Activated B cell treated with CpG ODN at 0.5 μM for 24 hours (primary cell): ENCODE measurements at regions of chr12 and their contacts with region 1.

Region 1: DNA sequence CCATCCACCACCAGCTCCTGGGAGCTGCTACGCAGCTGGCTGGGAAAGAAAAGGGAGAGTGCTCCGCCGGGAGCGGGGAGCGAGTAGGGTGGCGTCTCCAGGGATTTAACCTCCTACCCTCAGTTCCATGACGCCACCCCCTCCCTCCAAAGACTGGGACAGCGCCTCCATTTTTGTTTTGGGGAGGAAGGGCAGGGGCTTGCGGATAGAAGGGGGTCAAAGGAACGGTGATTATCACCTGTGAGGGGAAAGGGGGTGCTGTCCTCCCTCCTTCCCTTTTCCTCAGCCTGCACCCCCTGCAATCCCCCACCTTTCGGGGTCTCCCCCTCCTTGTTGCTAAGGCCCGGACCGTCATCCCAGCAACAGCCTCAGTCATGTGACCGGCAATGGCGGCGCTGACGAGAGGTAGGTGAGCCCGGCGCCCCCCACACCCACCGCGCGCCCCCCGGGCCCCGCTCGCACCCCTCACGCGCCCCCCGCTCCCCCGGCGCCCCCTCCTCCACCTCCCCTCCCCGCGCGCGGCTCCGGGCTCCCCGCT is at the start of gene DTX3:
- DNase-seq: no peak
- ATAC-seq: peak; percentile 61
- H3K4me3 Mint-ChIP-seq: peak within 1 kb of the TSS; percentile 79
- H3K27ac Mint-ChIP-seq: no peak within 1 kb of the TSS
- H3K4me1 Mint-ChIP-seq: peaks cover 16% of the 10 kb centered on the region
- H3K27me3 Mint-ChIP-seq: peaks cover 34% of the 10 kb centered on the region
- CTCF ChIP-seq: no peak
- total RNA-seq, gene DTX3: 3.7 and 3.9 TPM in 2 replicates

Region 2: GRCh38 chr12:57590536-57591479 is 13.7 kb before region 1 on chr12 and contains the start of gene PIP4K2C:
- CTCF ChIA-PET with region 1: no interaction called
- POLR2A ChIA-PET with region 1: interaction called, 10 read pairs
- intact Hi-C with region 1: loop called (anchors 1 kb)
- DNase-seq: peak; percentile 79
- ATAC-seq: peak; percentile 96
- H3K4me3 Mint-ChIP-seq: peak within 1 kb of the TSS; percentile 88
- H3K27ac Mint-ChIP-seq: peak within 1 kb of the TSS; percentile 68
- H3K4me1 Mint-ChIP-seq: peaks cover 19% of the 10 kb centered on the region
- H3K27me3 Mint-ChIP-seq: no peaks in the 10 kb centered on the region
- CTCF ChIP-seq: no peak
- total RNA-seq, gene PIP4K2C: 16.5 and 17.9 TPM in 2 replicates

Region 3: GRCh38 chr12:57771708-57772428 is 167.3 kb after region 1 on chr12 and contains the start of gene METTL1:
- CTCF ChIA-PET with region 1: no interaction called
- POLR2A ChIA-PET with region 1: no interaction called
- intact Hi-C with region 1: no loop called
- DNase-seq: peak; percentile 81
- ATAC-seq: peak; percentile 91
- H3K4me3 Mint-ChIP-seq: peak within 1 kb of the TSS; percentile 98
- H3K27ac Mint-ChIP-seq: peak within 1 kb of the TSS; percentile 98
- H3K4me1 Mint-ChIP-seq: peaks cover 20% of the 10 kb centered on the region
- H3K27me3 Mint-ChIP-seq: peaks cover under 1% of the 10 kb centered on the region
- CTCF ChIP-seq: no peak
- total RNA-seq, gene METTL1: 32.2 and 40.7 TPM in 2 replicates